ENCODE measurements at regions of chr2 and their contacts with region 1.

Region 1: GRCh38 chr2:41414486-41415230 is 633.2 kb upstream of the PKDCC start:
- DNase-seq: peak; percentile 29
- H3K4me3 ChIP-seq: no peak overlapping the region
- H3K27ac ChIP-seq: no peak overlapping the region
- H3K4me1 ChIP-seq: no peaks in the 10 kb centered on the region
- CTCF ChIP-seq: peak; percentile 86

Region 2: DNA sequence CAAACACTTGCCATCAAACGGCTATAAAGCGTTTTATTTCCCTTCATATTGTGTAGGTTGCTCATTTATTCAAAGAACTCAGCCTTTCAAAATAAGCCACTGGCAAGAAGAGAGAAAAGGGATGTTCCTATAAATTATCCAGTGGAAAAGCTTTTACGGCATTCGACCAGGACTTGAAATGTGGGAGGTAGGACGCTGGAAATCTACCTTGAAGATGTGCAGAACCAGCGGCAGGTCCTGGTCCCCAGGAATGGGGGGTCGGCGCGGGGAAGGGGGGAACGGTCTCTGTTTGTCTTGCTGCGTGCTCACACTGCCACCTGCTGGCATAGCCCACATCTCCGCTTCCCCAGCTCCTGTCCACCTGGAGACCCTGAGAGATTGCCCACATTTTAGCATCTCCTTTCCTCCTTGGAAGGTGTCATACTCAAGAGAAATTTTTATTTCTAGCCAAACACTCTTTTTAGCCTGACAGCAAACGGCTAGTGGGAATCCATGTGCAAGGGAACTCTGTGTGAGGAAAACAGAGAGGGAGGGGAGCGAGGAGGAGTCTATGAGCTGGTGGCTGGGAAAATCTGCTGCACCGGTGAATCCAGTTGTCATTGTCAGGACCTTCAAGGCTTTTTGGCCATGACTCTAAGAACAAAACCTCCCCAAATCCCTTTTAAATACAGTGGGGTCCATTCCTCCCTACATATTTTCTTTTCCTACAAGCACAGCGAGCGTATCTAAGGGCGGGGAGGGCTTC is 284.2 kb after region 1 on chr2:
- CTCF ChIA-PET with region 1: no interaction called
- POLR2A ChIA-PET with region 1: no interaction called
- intact Hi-C with region 1: loop called (anchors 2 kb)
- DNase-seq: peak; percentile 14
- H3K4me3 ChIP-seq: no peak overlapping the region
- H3K27ac ChIP-seq: no peak overlapping the region
- H3K4me1 ChIP-seq: no peaks in the 10 kb centered on the region
- CTCF ChIP-seq: peak; percentile 87

Region 3: GRCh38 chr2:41782306-41783158 is 367.9 kb after region 1 on chr2:
- CTCF ChIA-PET with region 1: no interaction called
- POLR2A ChIA-PET with region 1: no interaction called
- intact Hi-C with region 1: loop called (anchors 1 kb)
- DNase-seq: peak; percentile 39
- H3K4me3 ChIP-seq: no peak overlapping the region
- H3K27ac ChIP-seq: no peak overlapping the region
- H3K4me1 ChIP-seq: no peaks in the 10 kb centered on the region
- CTCF ChIP-seq: peak; percentile 98